Activated CD4-positive, alpha-beta T cell treated with anti-CD3 and anti-CD28 coated beads for 36 hours (primary cell): ENCODE measurements at regions of chr2 and their contacts with region 1.

Region 1: GRCh38 chr2:232611551-232612218 is 21.7 kb upstream of the EFHD1 start:
- DNase-seq: peak; percentile 84
- ATAC-seq: peak; percentile 80
- H3K4me3 Mint-ChIP-seq: no peak overlapping the region
- H3K27ac Mint-ChIP-seq: no peak overlapping the region
- H3K4me1 Mint-ChIP-seq: no peaks in the 10 kb centered on the region
- H3K27me3 Mint-ChIP-seq: no peaks in the 10 kb centered on the region

Region 2: DNA sequence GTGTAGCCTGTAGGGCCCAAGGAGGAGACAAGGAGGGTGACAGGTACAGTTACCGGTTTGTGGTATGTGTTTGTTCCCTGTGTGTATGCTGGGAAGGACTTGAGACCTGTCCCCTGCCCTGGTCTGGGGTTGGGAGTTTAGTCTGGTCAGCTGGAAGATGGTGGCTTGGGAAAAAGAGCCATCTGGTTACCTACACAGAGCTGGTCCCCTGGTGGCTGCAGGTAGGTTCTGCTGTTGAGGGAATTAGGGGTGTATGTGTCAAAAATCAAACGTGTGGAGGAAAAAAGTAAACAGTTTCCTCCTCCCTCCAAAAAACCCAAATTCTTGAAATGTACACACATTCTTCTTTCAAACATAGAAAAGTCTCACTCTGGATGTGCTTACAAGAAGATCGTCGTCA is 879.1 kb before region 1 on chr2:
- CTCF ChIA-PET with region 1: no interaction called
- POLR2A ChIA-PET with region 1: no interaction called
- intact Hi-C with region 1: no loop called
- DNase-seq: no peak
- ATAC-seq: no peak
- H3K4me3 Mint-ChIP-seq: no peak overlapping the region
- H3K27ac Mint-ChIP-seq: no peak overlapping the region
- H3K4me1 Mint-ChIP-seq: no peaks in the 10 kb centered on the region
- H3K27me3 Mint-ChIP-seq: no peaks in the 10 kb centered on the region

Region 3: DNA sequence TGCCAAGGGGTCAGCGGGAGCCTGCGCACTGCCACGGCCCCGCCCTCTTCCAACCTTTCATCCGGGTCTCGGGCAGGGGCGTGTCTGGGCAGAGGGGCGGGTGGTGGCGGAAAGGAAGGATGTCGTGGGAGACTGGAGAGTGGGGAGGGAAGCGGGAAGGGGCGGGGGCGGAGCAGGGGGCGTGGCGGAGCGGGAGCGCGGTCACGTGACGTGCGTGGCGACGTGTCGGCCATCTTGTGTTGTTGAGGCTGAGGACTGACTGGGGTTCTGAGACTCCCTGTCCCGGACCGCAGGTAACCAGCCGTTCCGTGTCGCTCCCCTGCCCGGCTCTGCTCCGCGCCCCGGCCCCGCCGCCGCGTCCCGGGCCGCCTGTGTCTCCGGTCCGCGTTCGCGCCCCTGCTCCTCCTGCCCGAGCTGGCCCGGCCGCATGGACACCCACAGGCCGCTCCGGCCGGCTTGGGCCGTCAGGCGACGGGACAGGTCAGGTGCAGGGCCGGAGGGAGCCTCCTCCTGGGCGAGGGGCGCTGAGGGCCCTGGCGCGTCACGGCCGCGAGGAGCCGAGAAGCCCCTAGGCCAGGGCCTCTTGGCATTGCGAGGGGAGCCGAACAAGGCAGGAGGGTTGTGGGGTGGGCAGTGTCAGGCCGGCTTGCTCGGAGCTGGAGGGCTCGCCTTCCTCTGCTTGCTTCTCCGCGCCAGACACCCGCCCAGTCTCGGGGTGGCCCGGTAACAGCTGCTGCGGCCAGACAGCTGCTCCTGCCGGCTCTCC is 85.6 kb after region 1 on chr2 and contains the start of gene GIGYF2:
- CTCF ChIA-PET with region 1: interaction called, 5 read pairs
- POLR2A ChIA-PET with region 1: no interaction called
- intact Hi-C with region 1: loop called (anchors 1 to 5 kb)
- DNase-seq: peak; percentile 98
- ATAC-seq: peak; percentile 92
- H3K4me3 Mint-ChIP-seq: peak within 1 kb of the TSS; percentile 99
- H3K27ac Mint-ChIP-seq: peak within 1 kb of the TSS; percentile 87
- H3K4me1 Mint-ChIP-seq: peaks cover 36% of the 10 kb centered on the region
- H3K27me3 Mint-ChIP-seq: no peaks in the 10 kb centered on the region
- total RNA-seq, gene GIGYF2: 51.1 to 51.9 TPM

Region 4: GRCh38 chr2:233029321-233029720 is 417.6 kb after region 1 on chr2:
- CTCF ChIA-PET with region 1: no interaction called
- POLR2A ChIA-PET with region 1: no interaction called
- intact Hi-C with region 1: loop called in 1 of 2 experiments (anchors 1 kb)
- DNase-seq: no peak
- ATAC-seq: no peak
- H3K4me3 Mint-ChIP-seq: no peak overlapping the region
- H3K27ac Mint-ChIP-seq: no peak overlapping the region
- H3K4me1 Mint-ChIP-seq: peaks cover 8% of the 10 kb centered on the region
- H3K27me3 Mint-ChIP-seq: no peaks in the 10 kb centered on the region

Region 5: GRCh38 chr2:233267516-233268245 is 656.0 kb after region 1 on chr2:
- CTCF ChIA-PET with region 1: no interaction called
- POLR2A ChIA-PET with region 1: no interaction called
- intact Hi-C with region 1: loop called in 1 of 2 experiments (anchors 5 kb)
- DNase-seq: peak; percentile 85
- ATAC-seq: peak; percentile 95
- H3K4me3 Mint-ChIP-seq: peak overlapping the region; percentile 53
- H3K27ac Mint-ChIP-seq: peak overlapping the region; percentile 98
- H3K4me1 Mint-ChIP-seq: peaks cover 66% of the 10 kb centered on the region
- H3K27me3 Mint-ChIP-seq: no peaks in the 10 kb centered on the region

Region 6: DNA sequence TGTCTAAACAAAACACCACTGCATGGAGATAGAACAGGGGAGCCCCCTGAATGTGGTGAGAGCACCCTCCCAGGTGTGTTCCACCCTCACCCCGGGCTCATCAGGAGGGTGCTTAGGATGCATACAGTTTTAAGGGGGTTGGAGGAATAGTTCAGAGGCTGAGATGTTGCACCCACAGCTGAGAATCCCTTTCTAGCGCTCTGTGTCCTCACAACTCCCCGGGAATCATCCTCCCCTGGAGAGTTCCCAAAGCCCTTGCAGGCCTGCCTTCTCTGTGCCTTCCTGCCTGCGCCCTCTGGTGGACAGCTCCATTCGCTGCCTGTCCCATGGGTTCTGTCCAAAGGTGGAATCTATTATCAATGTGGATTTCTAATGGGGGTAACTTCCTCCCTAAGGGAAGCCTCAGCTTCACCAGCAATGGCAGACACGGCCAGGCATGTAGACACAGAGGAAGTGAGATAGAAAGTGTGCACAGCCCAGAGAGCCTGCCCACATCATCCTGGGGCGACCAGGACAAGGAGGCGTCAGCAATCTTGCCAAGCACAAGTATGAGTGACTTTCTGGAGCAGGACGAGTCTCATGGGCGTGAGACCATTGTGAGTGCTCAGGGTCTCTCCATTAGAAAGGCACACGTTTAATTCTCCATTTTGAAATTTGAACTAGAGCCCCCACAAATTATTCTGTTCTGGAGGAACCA is 1099.8 kb after region 1 on chr2:
- CTCF ChIA-PET with region 1: no interaction called
- POLR2A ChIA-PET with region 1: no interaction called
- intact Hi-C with region 1: loop called in 1 of 2 experiments (anchors 1 kb)
- DNase-seq: peak; percentile 86
- ATAC-seq: peak; percentile 61
- H3K4me3 Mint-ChIP-seq: no peak overlapping the region
- H3K27ac Mint-ChIP-seq: no peak overlapping the region
- H3K4me1 Mint-ChIP-seq: no peaks in the 10 kb centered on the region
- H3K27me3 Mint-ChIP-seq: peaks cover 25% of the 10 kb centered on the region